Ovary (tissue), 10 donors: ENCODE measurements at regions of chr20 and their contacts with region 1.

Region 1: DNA sequence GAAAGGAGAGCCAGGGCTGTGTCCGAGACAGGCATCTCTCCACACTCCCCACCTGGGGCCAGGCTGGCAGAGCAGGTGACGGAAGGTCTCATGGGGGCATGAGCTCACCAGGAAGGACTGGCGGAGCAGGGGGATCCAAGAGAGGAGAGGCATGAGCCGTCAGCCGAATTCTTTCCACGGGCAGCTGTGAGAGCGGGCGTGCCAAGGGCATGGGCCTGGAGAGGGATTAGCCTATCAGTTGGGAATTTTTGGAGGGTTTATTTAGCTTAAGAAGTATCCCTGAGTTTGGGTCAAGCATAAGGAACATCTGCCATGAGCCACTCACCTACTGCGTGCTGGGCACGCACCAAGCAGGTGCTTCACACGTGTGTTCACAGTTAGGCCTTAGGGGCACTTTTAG is 60.2 kb upstream of the ZNFX1 start:
- DNase-seq: no peak
- H3K4me3 ChIP-seq: no peak overlapping the region
- H3K27ac ChIP-seq: no peak overlapping the region
- H3K4me1 ChIP-seq: no peaks in the 10 kb centered on the region
- H3K27me3 ChIP-seq: no peaks in the 10 kb centered on the region
- CTCF ChIP-seq: no peak
- EP300 ChIP-seq: no peak
- POLR2A ChIP-seq: no peak

Region 2: DNA sequence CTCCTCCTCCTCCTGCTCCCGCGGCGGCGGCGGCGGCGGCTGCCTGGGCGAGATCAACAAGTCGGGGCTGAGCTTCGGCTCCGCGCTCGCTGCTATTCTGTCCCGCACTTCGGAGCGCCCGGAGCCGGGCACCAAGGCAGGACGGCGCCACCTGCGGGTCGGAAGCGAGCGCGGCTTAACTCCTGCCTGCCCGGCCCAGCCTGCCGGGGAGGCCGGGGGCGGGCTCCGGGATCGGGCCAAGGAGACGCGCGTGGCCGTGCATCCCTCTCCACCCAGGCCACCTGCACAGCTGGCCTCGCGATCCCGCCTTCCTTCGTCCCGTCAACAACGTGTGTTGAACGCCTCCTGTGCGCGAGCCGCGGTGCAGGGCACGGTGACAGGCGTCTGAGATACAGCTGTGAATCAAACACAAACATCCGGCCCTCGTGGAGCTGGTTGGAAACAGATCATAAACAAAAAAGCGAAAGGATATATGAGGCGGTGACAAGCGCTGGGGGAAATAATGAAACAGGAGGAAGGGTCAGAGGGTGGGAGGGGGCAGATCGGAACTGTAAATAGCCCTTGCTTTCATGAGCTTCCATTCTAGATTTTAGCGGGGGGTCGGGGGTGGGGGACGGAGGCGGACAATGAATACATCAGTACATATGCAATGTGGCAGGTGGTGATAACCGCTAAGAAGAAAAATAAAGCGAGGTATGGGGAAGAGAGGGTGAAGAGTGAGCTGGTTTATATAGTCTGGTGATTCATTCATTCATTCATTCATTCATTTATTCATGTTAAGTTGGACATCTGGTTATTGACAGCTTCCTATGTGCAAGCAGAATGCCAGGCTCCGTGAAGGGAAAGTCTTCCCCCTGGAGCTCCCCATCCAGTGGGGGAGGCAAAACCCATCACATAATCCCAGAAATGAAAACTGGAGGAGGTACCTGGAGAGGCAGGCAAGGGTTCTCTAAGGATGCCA is 146.4 kb after region 1 on chr20:
- intact Hi-C with region 1: loop called (anchors 2 to 5 kb)
- DNase-seq: peak; percentile 68 to 90 (median 70)
- H3K4me3 ChIP-seq: peak overlapping the region; percentile 34
- H3K27ac ChIP-seq: no peak overlapping the region
- H3K4me1 ChIP-seq: peaks cover 2% of the 10 kb centered on the region
- H3K27me3 ChIP-seq: no peaks in the 10 kb centered on the region
- CTCF ChIP-seq: peak in 2 of 3 donors; percentile 59 to 69
- EP300 ChIP-seq: no peak
- POLR2A ChIP-seq: no peak

Region 3: GRCh38 chr20:49510562-49511122 is 172.6 kb after region 1 on chr20:
- intact Hi-C with region 1: loop called in 1 of 4 experiments (anchors 10 kb)
- DNase-seq: peak; percentile 65 to 83 (median 73)
- H3K4me3 ChIP-seq: no peak overlapping the region
- H3K27ac ChIP-seq: peak overlapping the region in 1 of 2 donors; percentile 26
- H3K4me1 ChIP-seq: peaks cover 2% of the 10 kb centered on the region
- H3K27me3 ChIP-seq: no peaks in the 10 kb centered on the region
- CTCF ChIP-seq: no peak
- EP300 ChIP-seq: no peak
- POLR2A ChIP-seq: no peak

Region 4: DNA sequence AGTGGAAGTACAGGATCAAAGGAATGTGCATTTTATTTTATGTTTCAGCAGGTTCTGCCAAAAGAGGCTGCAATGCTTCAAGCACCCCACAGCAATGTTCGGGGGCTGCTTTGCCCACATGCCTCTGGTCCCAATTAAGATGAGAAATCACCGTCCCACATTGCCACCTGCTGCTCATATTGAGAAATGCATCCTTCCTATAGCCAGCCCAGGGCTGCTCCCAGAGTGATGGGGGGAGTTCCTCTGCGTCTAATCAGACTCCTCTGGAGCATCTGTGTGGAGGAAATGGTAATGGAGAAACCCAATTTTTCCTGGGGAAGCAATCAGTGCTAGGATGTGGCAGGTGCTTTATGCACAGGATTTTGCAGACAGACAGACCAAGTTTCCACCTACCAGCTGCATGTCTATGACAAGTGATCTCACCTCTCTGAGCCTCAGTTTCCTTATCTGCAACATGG is 196.2 kb after region 1 on chr20:
- intact Hi-C with region 1: loop called in 2 of 4 experiments (anchors 2 to 5 kb)
- DNase-seq: peak in 4 of 5 donors; percentile 32 to 62 (median 50)
- H3K4me3 ChIP-seq: no peak overlapping the region
- H3K27ac ChIP-seq: no peak overlapping the region
- H3K4me1 ChIP-seq: no peaks in the 10 kb centered on the region
- H3K27me3 ChIP-seq: no peaks in the 10 kb centered on the region
- CTCF ChIP-seq: peak; percentile 38 to 65 (median 61)
- EP300 ChIP-seq: no peak
- POLR2A ChIP-seq: no peak

Region 5: GRCh38 chr20:49853640-49854039 is 515.6 kb after region 1 on chr20:
- intact Hi-C with region 1: loop called in 1 of 4 experiments (anchors 10 kb)
- DNase-seq: no peak
- H3K4me3 ChIP-seq: no peak overlapping the region
- H3K27ac ChIP-seq: no peak overlapping the region
- H3K4me1 ChIP-seq: no peaks in the 10 kb centered on the region
- H3K27me3 ChIP-seq: no peaks in the 10 kb centered on the region
- CTCF ChIP-seq: no peak
- EP300 ChIP-seq: no peak
- POLR2A ChIP-seq: no peak